ENCODE measurements at regions of chr16 and their contacts with region 1.

Region 1: GRCh38 chr16:21184834-21185233 is 26.4 kb downstream of the LDAF1 start:
- DNase-seq: no peak
- H3K4me3 ChIP-seq: no peak overlapping the region
- H3K27ac ChIP-seq: no peak overlapping the region
- H3K4me1 ChIP-seq: no peaks in the 10 kb centered on the region
- H3K27me3 ChIP-seq: no peaks in the 10 kb centered on the region
- CTCF ChIP-seq: no peak
- POLR2A ChIP-seq: no peak

Region 2: GRCh38 chr16:21277927-21278706 is 93.3 kb after region 1 on chr16 and contains the start of gene CRYM:
- intact Hi-C with region 1: loop called (anchors 5 kb)
- DNase-seq: peak; percentile 71
- H3K4me3 ChIP-seq: peak within 1 kb of the TSS; percentile 36 to 45
- H3K27ac ChIP-seq: peak within 1 kb of the TSS; percentile 40 to 52
- H3K4me1 ChIP-seq: no peaks in the 10 kb centered on the region
- H3K27me3 ChIP-seq: no peaks in the 10 kb centered on the region
- CTCF ChIP-seq: peak; percentile 57 to 77 (median 74)
- POLR2A ChIP-seq: peak; percentile 16
- total RNA-seq, gene CRYM: 44.3 to 59.5 TPM

Measured in prostate gland (tissue), 2 donors.